ENCODE measurements at regions of chr17 and their contacts with region 1.

Region 1: GRCh38 chr17:47004906-47005305 is 25.9 kb upstream of the RPRML start:
- DNase-seq: no peak
- ATAC-seq: no peak
- H3K4me3 ChIP-seq: no peak overlapping the region
- H3K27ac ChIP-seq: no peak overlapping the region
- H3K4me1 ChIP-seq: peaks cover 5% of the 10 kb centered on the region; the same call in 1 of the 2 replicates
- H3K27me3 ChIP-seq: no peaks in the 10 kb centered on the region
- CTCF ChIP-seq: no peak
- POLR2A ChIP-seq: no peak
- RAD21 ChIP-seq: no peak

Region 2: DNA sequence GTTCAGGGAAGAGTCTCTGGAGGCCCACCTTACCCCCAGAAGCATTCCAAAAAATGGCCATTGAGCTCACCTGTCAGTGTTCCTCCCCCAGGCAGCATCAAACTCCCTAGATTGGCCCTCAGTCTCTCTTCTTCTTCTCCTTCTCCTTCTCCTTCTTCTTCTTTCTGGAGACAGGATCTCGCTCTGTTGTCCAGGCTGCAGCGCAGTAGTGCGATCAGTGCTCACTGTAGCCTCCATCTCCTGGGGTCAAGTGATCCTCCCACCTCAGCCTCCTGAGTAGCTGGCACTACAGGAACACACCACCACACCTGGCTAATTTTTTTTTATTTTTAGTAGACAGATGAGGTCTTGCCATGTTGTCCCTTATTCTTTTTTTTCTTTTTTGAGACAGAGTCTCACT is 170.1 kb before region 1 on chr17:
- CTCF ChIA-PET with region 1: no interaction called
- POLR2A ChIA-PET with region 1: no interaction called
- dilution Hi-C with region 1: no loop called
- in situ Hi-C with region 1: no loop called
- intact Hi-C with region 1: no loop called
- DNase-seq: no peak
- ATAC-seq: no peak
- H3K4me3 ChIP-seq: no peak overlapping the region
- H3K27ac ChIP-seq: no peak overlapping the region
- H3K4me1 ChIP-seq: no peaks in the 10 kb centered on the region
- H3K27me3 ChIP-seq: peaks cover 18% of the 10 kb centered on the region; the same call in 1 of the 2 replicates
- CTCF ChIP-seq: no peak
- POLR2A ChIP-seq: no peak
- RAD21 ChIP-seq: no peak

Region 3: GRCh38 chr17:46949291-46950174 is 55.4 kb before region 1 on chr17:
- CTCF ChIA-PET with region 1: no interaction called
- POLR2A ChIA-PET with region 1: no interaction called
- dilution Hi-C with region 1: no loop called
- in situ Hi-C with region 1: loop called (anchors 5 kb)
- intact Hi-C with region 1: no loop called
- DNase-seq: peak; percentile 48
- ATAC-seq: peak; percentile 42
- H3K4me3 ChIP-seq: no peak overlapping the region
- H3K27ac ChIP-seq: no peak overlapping the region
- H3K4me1 ChIP-seq: no peaks in the 10 kb centered on the region; the same call in 1 of the 2 replicates
- H3K27me3 ChIP-seq: no peaks in the 10 kb centered on the region; the same call in 1 of the 2 replicates
- CTCF ChIP-seq: no peak
- POLR2A ChIP-seq: no peak
- RAD21 ChIP-seq: no peak

Region 4: GRCh38 chr17:46964315-46965253 is 40.3 kb before region 1 on chr17:
- CTCF ChIA-PET with region 1: no interaction called
- POLR2A ChIA-PET with region 1: no interaction called
- dilution Hi-C with region 1: no loop called
- in situ Hi-C with region 1: no loop called
- intact Hi-C with region 1: loop called (anchors 5 kb)
- DNase-seq: peak; percentile 41
- ATAC-seq: no peak
- H3K4me3 ChIP-seq: no peak overlapping the region
- H3K27ac ChIP-seq: no peak overlapping the region
- H3K4me1 ChIP-seq: peaks cover 4% of the 10 kb centered on the region
- H3K27me3 ChIP-seq: peaks cover 23% of the 10 kb centered on the region
- CTCF ChIP-seq: no peak
- POLR2A ChIP-seq: no peak
- RAD21 ChIP-seq: no peak